ENCODE measurements at regions of chr11 and their contacts with region 1.

Region 1: GRCh38 chr11:125568970-125569914 is at the start of gene EI24:
- DNase-seq: peak; percentile 91
- ATAC-seq: peak; percentile 99
- H3K4me3 Mint-ChIP-seq: peak within 1 kb of the TSS; percentile 89
- H3K27ac Mint-ChIP-seq: peak within 1 kb of the TSS; percentile 90
- H3K4me1 Mint-ChIP-seq: peaks cover 29% of the 10 kb centered on the region
- H3K27me3 Mint-ChIP-seq: no peaks in the 10 kb centered on the region
- total RNA-seq, gene EI24: 45.8 to 46.2 TPM

Region 2: DNA sequence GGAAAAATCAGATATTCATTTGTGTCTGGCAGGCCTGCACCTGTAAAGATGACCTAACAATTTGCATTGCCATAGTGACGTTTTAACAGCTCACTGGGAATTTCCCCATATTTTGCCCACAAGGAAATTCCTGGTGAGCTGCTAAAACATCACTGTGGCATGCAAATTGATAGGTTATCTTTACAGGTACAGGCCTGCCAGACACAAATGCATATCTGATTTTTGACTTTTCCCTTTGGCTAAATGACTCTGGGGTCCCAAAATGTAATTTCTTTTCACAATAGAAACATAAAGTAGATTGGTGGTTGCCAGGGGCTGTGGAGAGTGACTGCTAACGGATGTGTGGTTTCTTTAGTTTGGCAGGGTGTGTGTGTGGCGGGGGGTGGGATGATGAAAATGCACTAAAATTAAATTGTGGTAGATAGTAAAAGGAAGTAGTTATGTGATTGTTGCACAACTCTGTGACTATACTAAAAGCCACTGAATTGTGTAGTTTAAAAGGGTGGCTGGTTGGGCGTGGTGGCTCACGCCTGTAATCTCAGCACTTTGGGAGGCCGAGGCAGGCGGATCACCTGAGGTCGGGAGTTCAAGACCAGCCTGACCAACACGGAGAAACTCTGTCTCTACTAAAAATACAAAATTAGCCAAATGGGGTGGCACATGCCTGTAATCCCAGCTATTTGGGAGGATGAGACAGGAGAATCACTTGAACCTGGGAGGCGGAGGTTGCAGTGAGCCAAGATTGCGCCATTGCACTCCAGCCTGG is 54.7 kb before region 1 on chr11:
- CTCF ChIA-PET with region 1: interaction called, 13 read pairs
- POLR2A ChIA-PET with region 1: no interaction called
- DNase-seq: peak; percentile 83
- ATAC-seq: peak; percentile 85
- H3K4me3 Mint-ChIP-seq: peak overlapping the region; percentile 10
- H3K27ac Mint-ChIP-seq: peak overlapping the region; percentile 83
- H3K4me1 Mint-ChIP-seq: peaks cover 56% of the 10 kb centered on the region
- H3K27me3 Mint-ChIP-seq: no peaks in the 10 kb centered on the region

Region 3: GRCh38 chr11:125535585-125535984 is 33.7 kb before region 1 on chr11:
- CTCF ChIA-PET with region 1: no interaction called
- POLR2A ChIA-PET with region 1: no interaction called
- DNase-seq: no peak
- ATAC-seq: no peak
- H3K4me3 Mint-ChIP-seq: no peak overlapping the region
- H3K27ac Mint-ChIP-seq: no peak overlapping the region
- H3K4me1 Mint-ChIP-seq: no peaks in the 10 kb centered on the region
- H3K27me3 Mint-ChIP-seq: peaks cover 3% of the 10 kb centered on the region

Region 4: GRCh38 chr11:125592305-125593112 is 23.3 kb after region 1 on chr11 and contains the start of gene STT3A:
- CTCF ChIA-PET with region 1: interaction called, 25 read pairs
- POLR2A ChIA-PET with region 1: interaction called, 29 read pairs
- DNase-seq: peak; percentile 98
- ATAC-seq: peak; percentile 98
- H3K4me3 Mint-ChIP-seq: peak within 1 kb of the TSS; percentile 93
- H3K27ac Mint-ChIP-seq: peak within 1 kb of the TSS; percentile 96
- H3K4me1 Mint-ChIP-seq: peaks cover 34% of the 10 kb centered on the region
- H3K27me3 Mint-ChIP-seq: no peaks in the 10 kb centered on the region
- total RNA-seq, gene STT3A: 103 to 114 TPM

Region 5: GRCh38 chr11:125625630-125626287 is 56.5 kb after region 1 on chr11:
- CTCF ChIA-PET with region 1: interaction called, 4 read pairs
- POLR2A ChIA-PET with region 1: interaction called, 12 read pairs
- DNase-seq: peak; percentile 91
- ATAC-seq: peak; percentile 90
- H3K4me3 Mint-ChIP-seq: peak overlapping the region; percentile 90
- H3K27ac Mint-ChIP-seq: peak overlapping the region; percentile 97
- H3K4me1 Mint-ChIP-seq: peaks cover 29% of the 10 kb centered on the region
- H3K27me3 Mint-ChIP-seq: no peaks in the 10 kb centered on the region

Measured in activated CD8-positive, alpha-beta T cell treated with anti-CD3 and anti-CD28 coated beads, Interleukin-2, amount 10 ng/mL, durations not matched to agents 7 days and 5 days (primary cell).